ENCODE measurements at regions of chr11 and their contacts with region 1.

Region 1: DNA sequence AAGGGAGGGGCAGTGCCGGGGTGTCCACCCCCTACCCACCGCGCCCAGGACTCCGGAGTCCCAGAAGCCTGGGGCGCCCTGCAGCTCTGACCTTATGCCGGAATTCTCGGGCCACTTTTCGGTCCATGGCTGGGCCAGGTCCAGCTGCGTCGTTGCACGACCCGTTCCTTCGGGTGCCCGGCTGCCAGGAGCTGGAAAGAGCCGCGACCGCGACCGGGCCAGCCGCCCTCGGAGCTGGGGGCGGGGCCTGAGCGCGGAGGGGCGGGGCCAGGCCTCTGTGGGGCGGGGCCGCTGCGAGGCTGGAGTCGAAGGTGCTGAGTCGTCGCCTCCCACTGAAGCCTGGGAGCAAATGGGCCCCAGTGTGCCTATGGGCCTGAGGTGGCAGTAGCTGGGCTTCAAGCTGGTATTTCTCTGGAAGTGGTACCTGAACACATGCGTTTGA is at the start of gene USH1C:
- DNase-seq: peak; percentile 76
- H3K4me3 ChIP-seq: no peak within 1 kb of the TSS
- H3K27ac ChIP-seq: no peak within 1 kb of the TSS
- H3K4me1 ChIP-seq: no peaks in the 10 kb centered on the region; a peak in 1 of 4 replicates
- H3K27me3 ChIP-seq: no peaks in the 10 kb centered on the region; the same call in 1 of the 2 replicates
- CTCF ChIP-seq: no peak
- EP300 ChIP-seq: no peak
- RAD21 ChIP-seq: no peak
- polyA plus RNA-seq, gene USH1C: not detected in 2 replicates

Region 2: GRCh38 chr11:17528181-17528691 is 16.0 kb before region 1 on chr11:
- CTCF ChIA-PET with region 1: interaction called, 31 read pairs
- POLR2A ChIA-PET with region 1: no interaction called
- DNase-seq: peak; percentile 88
- H3K4me3 ChIP-seq: peak overlapping the region in 1 of 2 experiments; percentile 41; a peak in 1 of 4 replicates
- H3K27ac ChIP-seq: no peak overlapping the region
- H3K4me1 ChIP-seq: peaks cover 0 to 11% of the 10 kb centered on the region in 2 experiments; a peak in 1 of 4 replicates
- H3K27me3 ChIP-seq: peaks cover 4% of the 10 kb centered on the region; the same call in 1 of the 2 replicates
- CTCF ChIP-seq: peak; percentile 84
- EP300 ChIP-seq: no peak
- RAD21 ChIP-seq: peak; percentile 77

Measured in SK-N-SH (cell line).